Mammary epithelial cell (primary cell): ENCODE measurements at regions of chr2 and their contacts with region 1.

Region 1: DNA sequence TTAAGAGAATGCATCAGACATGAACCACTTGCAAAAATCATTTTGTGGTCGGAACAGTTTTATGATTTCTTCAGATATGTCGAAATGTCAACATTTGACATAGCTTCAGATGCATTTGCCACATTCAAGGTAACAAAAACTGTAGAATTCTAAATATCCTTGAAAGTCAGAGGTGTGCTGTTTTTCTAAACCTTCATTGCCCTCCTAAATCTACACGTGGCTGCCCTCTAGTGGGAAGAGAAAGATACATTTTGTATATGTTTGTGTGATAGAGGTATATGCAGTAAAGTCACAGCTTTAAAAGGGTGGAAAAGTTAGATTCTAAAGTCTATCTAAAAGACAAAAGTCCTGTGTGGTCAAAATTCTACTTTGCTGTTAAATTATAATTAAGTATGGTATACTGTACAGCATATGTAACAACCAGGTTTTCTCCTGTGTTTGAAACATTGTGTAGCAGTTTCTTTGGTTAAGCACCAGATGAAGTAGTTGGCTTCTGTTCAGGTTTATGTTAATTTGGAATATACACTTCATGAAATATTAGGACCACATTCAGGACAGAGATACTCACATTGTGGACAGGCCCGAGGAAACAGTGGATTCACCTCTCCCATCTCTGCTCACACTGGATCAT is 65.9 kb upstream of the ITM2C start:
- DNase-seq: peak; percentile 51
- H3K4me3 ChIP-seq: no peak overlapping the region
- H3K27ac ChIP-seq: no peak overlapping the region
- H3K4me1 ChIP-seq: peaks cover 45% of the 10 kb centered on the region
- H3K27me3 ChIP-seq: no peaks in the 10 kb centered on the region
- CTCF ChIP-seq: peak; percentile 70 to 72

Region 2: GRCh38 chr2:230007931-230008707 is 790.8 kb before region 1 on chr2:
- CTCF ChIA-PET with region 1: no interaction called
- dilution Hi-C with region 1: no loop called
- in situ Hi-C with region 1: no loop called
- intact Hi-C with region 1: loop called (anchors 2 kb)
- DNase-seq: peak; percentile 47
- H3K4me3 ChIP-seq: no peak overlapping the region
- H3K27ac ChIP-seq: no peak overlapping the region
- H3K4me1 ChIP-seq: no peaks in the 10 kb centered on the region
- H3K27me3 ChIP-seq: no peaks in the 10 kb centered on the region
- CTCF ChIP-seq: peak; percentile 75 to 82

Region 3: GRCh38 chr2:230411570-230412370 is 387.1 kb before region 1 on chr2:
- CTCF ChIA-PET with region 1: no interaction called
- dilution Hi-C with region 1: no loop called
- in situ Hi-C with region 1: no loop called
- intact Hi-C with region 1: loop called (anchors 5 kb)
- DNase-seq: peak; percentile 58
- H3K4me3 ChIP-seq: peak overlapping the region; percentile 59 to 78 (median 60)
- H3K27ac ChIP-seq: peak overlapping the region; percentile 42
- H3K4me1 ChIP-seq: peaks cover 30% of the 10 kb centered on the region
- H3K27me3 ChIP-seq: no peaks in the 10 kb centered on the region
- CTCF ChIP-seq: no peak

Region 4: GRCh38 chr2:230712443-230713330 is 86.2 kb before region 1 on chr2 and contains the start of gene CAB39:
- CTCF ChIA-PET with region 1: interaction called, 3 read pairs
- dilution Hi-C with region 1: loop called (anchors 5 kb)
- in situ Hi-C with region 1: no loop called
- intact Hi-C with region 1: loop called (anchors 1 kb)
- DNase-seq: peak; percentile 84
- H3K4me3 ChIP-seq: peak within 1 kb of the TSS; percentile 70 to 86 (median 84)
- H3K27ac ChIP-seq: peak within 1 kb of the TSS; percentile 79
- H3K4me1 ChIP-seq: peaks cover 20% of the 10 kb centered on the region
- H3K27me3 ChIP-seq: no peaks in the 10 kb centered on the region
- CTCF ChIP-seq: peak; percentile 55
- total RNA-seq, gene CAB39: 68.3 to 115 TPM

Region 5: GRCh38 chr2:230748087-230748486 is 50.8 kb before region 1 on chr2:
- CTCF ChIA-PET with region 1: no interaction called
- dilution Hi-C with region 1: no loop called
- in situ Hi-C with region 1: no loop called
- intact Hi-C with region 1: loop called (anchors 10 kb)
- DNase-seq: peak; percentile 44
- H3K4me3 ChIP-seq: no peak overlapping the region
- H3K27ac ChIP-seq: peak overlapping the region; percentile 25
- H3K4me1 ChIP-seq: peaks cover 19% of the 10 kb centered on the region
- H3K27me3 ChIP-seq: no peaks in the 10 kb centered on the region
- CTCF ChIP-seq: no peak

Region 6: DNA sequence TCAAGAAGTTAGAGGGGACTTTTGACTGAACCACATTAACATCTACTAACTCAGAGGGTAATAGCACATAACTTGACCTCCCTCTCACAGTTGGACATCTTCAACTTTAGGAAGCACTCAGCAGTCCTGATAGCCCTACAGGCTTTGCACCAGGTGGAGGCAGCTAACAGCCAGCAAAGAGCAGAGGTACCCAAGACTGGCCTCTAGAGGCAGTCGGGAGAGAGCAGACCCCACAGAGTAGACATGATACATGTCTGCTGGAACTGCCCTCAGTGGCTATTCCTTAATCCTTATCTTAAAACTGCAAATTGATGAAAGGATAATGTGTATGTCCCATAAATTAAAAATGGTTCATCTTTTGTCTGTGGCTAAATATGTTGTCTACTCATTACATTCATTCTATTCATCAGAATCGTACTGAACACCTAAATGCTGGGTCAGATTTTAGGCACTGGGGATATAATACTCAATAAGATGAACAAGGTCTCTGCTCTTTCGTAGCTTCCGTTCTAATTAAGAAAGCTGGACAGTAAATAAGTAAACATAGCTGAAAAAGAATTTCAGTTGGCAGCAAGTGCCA is 36.5 kb before region 1 on chr2:
- CTCF ChIA-PET with region 1: no interaction called
- dilution Hi-C with region 1: no loop called
- in situ Hi-C with region 1: no loop called
- intact Hi-C with region 1: loop called (anchors 1 kb)
- DNase-seq: peak; percentile 28
- H3K4me3 ChIP-seq: no peak overlapping the region
- H3K27ac ChIP-seq: no peak overlapping the region
- H3K4me1 ChIP-seq: peaks cover 18% of the 10 kb centered on the region
- H3K27me3 ChIP-seq: no peaks in the 10 kb centered on the region
- CTCF ChIP-seq: peak; percentile 44 to 57

Region 7: GRCh38 chr2:230777721-230778120 is 21.2 kb before region 1 on chr2:
- CTCF ChIA-PET with region 1: interaction called, 14 read pairs
- dilution Hi-C with region 1: no loop called
- in situ Hi-C with region 1: no loop called
- intact Hi-C with region 1: loop called (anchors 1 kb)
- DNase-seq: peak; percentile 79
- H3K4me3 ChIP-seq: no peak overlapping the region
- H3K27ac ChIP-seq: peak overlapping the region; percentile 96
- H3K4me1 ChIP-seq: peaks cover 82% of the 10 kb centered on the region
- H3K27me3 ChIP-seq: no peaks in the 10 kb centered on the region
- CTCF ChIP-seq: no peak